Mammary epithelial cell (primary cell): ENCODE measurements at regions of chr12 and their contacts with region 1.

Region 1: GRCh38 chr12:1117970-1118563 is 127.0 kb downstream of the ERC1 start:
- DNase-seq: peak; percentile 53
- H3K4me3 ChIP-seq: no peak overlapping the region
- H3K27ac ChIP-seq: no peak overlapping the region
- H3K4me1 ChIP-seq: peaks cover 33% of the 10 kb centered on the region
- H3K27me3 ChIP-seq: no peaks in the 10 kb centered on the region
- CTCF ChIP-seq: peak; percentile 79 to 88

Region 2: DNA sequence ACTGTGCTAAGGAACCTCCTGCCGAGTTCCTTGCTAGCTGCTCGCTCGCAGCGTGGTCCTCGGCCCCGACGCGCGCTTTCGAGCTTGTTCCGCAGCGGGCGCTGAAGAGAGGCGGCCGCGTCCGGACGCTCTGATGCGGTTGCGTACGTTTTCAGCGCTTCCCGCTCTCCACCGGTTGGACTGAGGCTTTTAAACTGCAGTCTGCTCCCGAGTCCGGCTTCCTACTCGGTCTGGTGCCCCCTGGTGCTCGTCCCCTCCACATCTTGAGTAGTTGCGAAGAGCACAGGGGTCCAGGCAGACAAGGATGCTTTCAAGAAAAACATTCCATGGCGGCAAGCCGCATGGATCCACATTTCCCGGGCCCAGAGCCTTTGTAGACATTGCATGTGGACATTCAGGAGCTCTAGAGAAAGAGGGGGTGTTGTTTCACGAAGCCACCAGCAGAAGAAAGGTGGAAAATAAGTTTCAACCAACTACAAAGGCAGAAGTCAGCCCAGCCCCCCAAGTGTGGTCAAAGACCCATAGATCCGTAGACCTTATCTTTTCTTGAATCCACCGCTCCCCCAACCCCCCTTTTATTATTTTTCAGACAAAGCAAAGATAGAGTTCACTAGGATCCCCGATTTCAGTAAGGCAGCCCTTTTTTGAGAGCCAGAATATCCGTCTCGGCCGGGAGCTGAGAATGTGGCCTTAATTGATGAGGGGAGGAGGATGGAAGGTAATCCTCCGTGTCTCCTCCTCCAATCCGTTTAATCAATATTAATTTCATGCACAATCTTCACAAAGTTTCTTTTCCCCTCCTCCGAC is 366.7 kb before region 1 on chr12:
- CTCF ChIA-PET with region 1: no interaction called
- dilution Hi-C with region 1: no loop called
- in situ Hi-C with region 1: no loop called
- intact Hi-C with region 1: loop called (anchors 10 kb)
- DNase-seq: peak; percentile 92
- H3K4me3 ChIP-seq: peak overlapping the region; percentile 49 to 58 (median 57)
- H3K27ac ChIP-seq: peak overlapping the region; percentile 59
- H3K4me1 ChIP-seq: peaks cover 14% of the 10 kb centered on the region
- H3K27me3 ChIP-seq: no peaks in the 10 kb centered on the region
- CTCF ChIP-seq: peak; percentile 63 to 80

Region 3: GRCh38 chr12:1289371-1290155 is 171.5 kb after region 1 on chr12:
- CTCF ChIA-PET with region 1: no interaction called
- dilution Hi-C with region 1: no loop called
- in situ Hi-C with region 1: no loop called
- intact Hi-C with region 1: loop called (anchors 10 kb)
- DNase-seq: no peak
- H3K4me3 ChIP-seq: no peak overlapping the region
- H3K27ac ChIP-seq: no peak overlapping the region
- H3K4me1 ChIP-seq: no peaks in the 10 kb centered on the region
- H3K27me3 ChIP-seq: no peaks in the 10 kb centered on the region
- CTCF ChIP-seq: no peak

Region 4: DNA sequence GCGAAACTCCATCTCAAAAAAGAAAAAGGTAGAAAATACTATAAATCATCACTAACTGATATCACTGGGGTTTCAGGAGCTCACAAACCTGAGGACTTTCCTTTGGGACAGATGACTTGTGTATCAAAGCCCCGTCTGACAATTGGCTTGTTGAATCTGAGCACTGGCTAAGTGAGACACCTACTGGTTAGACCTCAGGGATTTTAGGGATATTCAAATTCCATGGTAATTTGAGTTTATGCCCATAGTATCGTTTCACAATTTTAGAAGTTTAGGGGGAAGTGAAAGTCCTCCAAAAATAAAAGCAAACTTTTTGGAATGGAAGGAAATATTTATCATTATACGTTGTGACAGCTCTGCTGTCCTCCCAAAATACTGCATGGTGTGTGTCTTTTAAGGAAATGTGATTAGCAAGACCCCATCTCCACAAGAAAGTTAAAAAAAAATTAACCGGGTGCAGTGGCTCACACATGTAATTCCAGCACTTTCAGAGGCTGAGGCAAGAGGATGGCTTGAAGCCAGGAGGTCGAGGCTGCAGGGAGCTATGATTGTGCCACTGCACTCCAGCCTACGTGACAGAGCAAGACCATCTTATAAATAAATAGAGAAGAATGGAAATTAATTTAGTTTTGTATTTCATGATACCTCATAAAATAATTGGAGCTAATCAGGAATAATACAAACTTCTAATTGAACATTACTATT is 427.1 kb after region 1 on chr12:
- CTCF ChIA-PET with region 1: interaction called, 20 read pairs
- dilution Hi-C with region 1: no loop called
- in situ Hi-C with region 1: no loop called
- intact Hi-C with region 1: loop called (anchors 1 kb)
- DNase-seq: no peak
- H3K4me3 ChIP-seq: no peak overlapping the region
- H3K27ac ChIP-seq: no peak overlapping the region
- H3K4me1 ChIP-seq: peaks cover 18% of the 10 kb centered on the region
- H3K27me3 ChIP-seq: no peaks in the 10 kb centered on the region
- CTCF ChIP-seq: peak; percentile 17 to 42

Region 5: GRCh38 chr12:1605129-1606020 is 487.3 kb after region 1 on chr12:
- CTCF ChIA-PET with region 1: interaction called, 5 read pairs
- dilution Hi-C with region 1: no loop called
- in situ Hi-C with region 1: no loop called
- intact Hi-C with region 1: loop called (anchors 1 kb)
- DNase-seq: peak; percentile 77
- H3K4me3 ChIP-seq: peak overlapping the region; percentile 30 to 47 (median 41)
- H3K27ac ChIP-seq: peak overlapping the region; percentile 61
- H3K4me1 ChIP-seq: peaks cover 23% of the 10 kb centered on the region
- H3K27me3 ChIP-seq: no peaks in the 10 kb centered on the region
- CTCF ChIP-seq: peak; percentile 70 to 80